BJ (cell line): ENCODE measurements at regions of chr2 and their contacts with region 1.

Region 1: DNA sequence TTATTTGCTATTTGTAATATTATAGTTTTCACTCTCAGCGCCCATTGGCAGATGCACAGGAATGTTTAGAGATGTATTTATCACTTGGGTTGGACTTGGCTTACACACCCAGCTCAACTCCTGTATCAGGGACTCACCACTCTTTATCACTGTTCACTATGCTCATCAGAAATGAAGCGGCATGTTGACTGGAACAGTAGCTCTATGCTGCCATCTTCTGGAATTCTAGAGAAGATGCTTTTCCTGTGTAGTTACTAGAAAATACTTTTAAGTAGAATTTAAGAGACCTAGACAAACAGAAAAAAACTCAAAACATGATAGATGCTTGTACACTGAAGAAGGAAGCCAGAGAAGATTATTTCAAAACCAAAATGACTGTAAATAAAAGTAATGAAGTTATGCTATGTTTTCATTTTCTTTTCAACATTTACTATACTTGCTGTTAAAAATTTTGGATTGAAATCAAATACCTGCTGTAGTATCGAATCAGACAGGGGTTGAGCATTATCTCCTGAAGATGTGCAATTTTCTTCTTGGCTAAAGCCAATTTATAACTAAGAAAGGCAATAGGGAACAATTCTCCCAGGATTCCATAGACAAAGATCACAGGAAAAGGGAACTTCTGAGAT is 47.4 kb upstream of the NXPH2 start:
- DNase-seq: peak; percentile 2
- H3K4me3 ChIP-seq: no peak overlapping the region
- H3K27me3 ChIP-seq: no peaks in the 10 kb centered on the region
- CTCF ChIP-seq: peak; percentile 69

Region 2: DNA sequence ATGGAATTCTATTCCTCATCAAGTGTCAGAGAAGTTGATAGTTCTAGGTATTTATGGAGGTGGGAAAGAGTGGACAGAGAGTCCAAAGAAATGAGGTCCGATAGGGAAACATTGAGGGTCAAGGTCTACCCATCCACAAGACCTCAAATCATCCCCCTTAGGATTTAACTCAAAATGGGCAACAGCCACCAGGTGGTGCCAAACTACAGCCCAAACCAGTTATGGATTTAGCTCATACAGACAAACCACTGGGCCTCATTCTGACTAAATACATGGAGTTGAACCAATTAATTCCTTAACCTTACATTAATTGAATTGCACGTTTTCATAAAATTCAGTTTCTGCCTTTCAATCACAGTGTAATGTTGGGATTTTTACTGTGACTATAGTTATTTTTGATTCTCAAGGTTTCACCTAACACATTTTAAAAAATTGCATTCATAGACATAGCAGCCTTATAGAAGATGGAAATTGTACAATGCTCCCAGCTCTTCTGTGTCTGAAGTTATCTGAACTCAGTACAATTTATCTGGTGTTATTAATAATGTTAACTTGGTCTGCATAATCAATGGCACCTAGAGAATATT is 961.5 kb before region 1 on chr2:
- CTCF ChIA-PET with region 1: interaction called, 11 read pairs
- POLR2A ChIA-PET with region 1: no interaction called
- DNase-seq: no peak
- H3K4me3 ChIP-seq: no peak overlapping the region
- H3K27me3 ChIP-seq: no peaks in the 10 kb centered on the region
- CTCF ChIP-seq: peak; percentile 66

Region 3: GRCh38 chr2:137888845-137889244 is 938.7 kb before region 1 on chr2:
- CTCF ChIA-PET with region 1: interaction called, 13 read pairs
- POLR2A ChIA-PET with region 1: no interaction called
- DNase-seq: no peak
- H3K4me3 ChIP-seq: no peak overlapping the region
- H3K27me3 ChIP-seq: no peaks in the 10 kb centered on the region
- CTCF ChIP-seq: peak; percentile 54

Region 4: DNA sequence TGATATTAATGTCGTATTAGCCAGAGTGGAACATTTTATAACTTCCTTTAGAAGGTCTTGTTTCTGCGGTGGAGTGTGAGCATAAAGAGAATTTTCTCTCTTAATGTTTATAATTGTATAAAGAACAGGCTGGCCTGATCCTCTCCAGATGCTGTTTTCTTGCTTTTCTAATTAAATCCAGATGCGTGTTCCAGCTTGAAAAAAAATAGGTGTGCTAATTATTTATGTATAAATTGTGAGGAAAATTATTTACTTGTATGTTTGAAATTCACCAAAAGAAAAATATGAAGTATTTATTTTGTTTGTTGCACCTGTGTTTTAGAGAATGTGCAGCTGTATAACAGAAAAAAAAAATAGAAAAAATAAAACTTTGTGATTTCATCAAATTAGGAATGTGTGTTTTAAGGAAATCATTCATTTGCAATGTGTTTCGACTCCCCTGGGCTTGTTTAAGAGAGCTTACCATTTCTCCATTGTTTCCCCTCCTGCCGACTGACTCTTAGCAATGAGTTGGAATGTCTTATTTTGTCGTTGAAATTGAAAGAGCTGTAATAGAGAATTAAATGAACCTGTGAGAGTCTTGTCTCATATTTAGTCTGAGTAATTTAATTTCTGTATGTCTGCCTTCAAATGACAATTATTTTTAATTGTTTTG is 172.7 kb after region 1 on chr2:
- CTCF ChIA-PET with region 1: no interaction called
- POLR2A ChIA-PET with region 1: no interaction called
- DNase-seq: no peak
- H3K4me3 ChIP-seq: no peak overlapping the region
- H3K27me3 ChIP-seq: no peaks in the 10 kb centered on the region
- CTCF ChIP-seq: no peak